ENCODE measurements at regions of chr16 and their contacts with region 1.

Region 1: GRCh38 chr16:2838928-2839327 is 8.8 kb downstream of the ZG16B start:
- DNase-seq: peak; percentile 71
- H3K4me3 ChIP-seq: no peak overlapping the region
- H3K27ac ChIP-seq: no peak overlapping the region
- H3K4me1 ChIP-seq: no peaks in the 10 kb centered on the region
- H3K27me3 ChIP-seq: no peaks in the 10 kb centered on the region
- CTCF ChIP-seq: peak; percentile 84

Region 2: DNA sequence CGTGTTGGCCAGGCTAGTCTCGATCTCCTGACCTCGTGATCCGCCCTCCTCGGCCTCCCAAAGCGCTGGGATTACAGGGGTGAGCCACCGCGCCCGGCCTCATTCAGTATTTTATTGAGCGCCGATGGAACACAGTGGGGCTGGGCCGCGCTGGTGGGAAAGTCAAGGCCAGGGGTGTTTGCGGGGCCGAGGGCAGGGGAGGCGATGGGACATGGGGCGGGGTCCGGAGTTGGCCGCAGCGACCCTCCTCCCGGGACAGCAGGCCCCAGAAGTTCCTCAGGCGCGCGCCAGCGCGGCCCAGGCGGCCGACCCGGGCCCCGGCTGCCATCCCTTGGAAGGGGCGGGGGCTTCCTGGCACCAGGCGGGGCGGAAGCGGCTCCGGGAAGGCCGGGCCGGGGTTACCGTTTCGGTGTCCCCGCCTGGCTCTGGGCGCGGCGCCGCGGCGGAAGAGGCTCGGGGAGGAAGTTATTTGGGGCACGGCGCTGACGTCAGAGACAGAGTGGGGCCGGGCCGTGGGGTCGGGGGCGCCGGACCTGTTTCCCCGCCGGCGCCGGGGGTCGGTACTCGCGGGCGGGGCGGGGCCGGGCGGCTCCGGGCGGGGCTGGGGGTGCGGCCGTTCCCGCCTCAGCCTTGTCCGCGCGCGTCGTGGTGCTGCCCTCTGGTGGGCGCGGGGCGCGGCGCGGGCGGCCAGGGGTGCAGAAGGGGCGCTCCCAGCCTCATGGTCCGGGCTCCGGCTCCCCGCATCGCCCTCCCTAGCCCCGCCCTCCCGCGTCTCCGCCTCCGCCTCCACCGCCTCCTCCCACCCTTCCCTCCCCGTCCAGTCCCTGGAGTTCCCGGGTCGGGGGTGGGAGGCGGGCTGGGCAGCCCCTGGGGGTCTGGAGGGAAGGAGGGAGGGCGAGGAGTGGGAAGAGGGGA is 118.0 kb before region 1 on chr16:
- CTCF ChIA-PET with region 1: no interaction called
- POLR2A ChIA-PET with region 1: no interaction called
- intact Hi-C with region 1: no loop called
- DNase-seq: peak; percentile 93
- H3K4me3 ChIP-seq: peak overlapping the region; percentile 59
- H3K27ac ChIP-seq: peak overlapping the region; percentile 68
- H3K4me1 ChIP-seq: no peaks in the 10 kb centered on the region
- H3K27me3 ChIP-seq: no peaks in the 10 kb centered on the region
- CTCF ChIP-seq: peak; percentile 56

Region 3: DNA sequence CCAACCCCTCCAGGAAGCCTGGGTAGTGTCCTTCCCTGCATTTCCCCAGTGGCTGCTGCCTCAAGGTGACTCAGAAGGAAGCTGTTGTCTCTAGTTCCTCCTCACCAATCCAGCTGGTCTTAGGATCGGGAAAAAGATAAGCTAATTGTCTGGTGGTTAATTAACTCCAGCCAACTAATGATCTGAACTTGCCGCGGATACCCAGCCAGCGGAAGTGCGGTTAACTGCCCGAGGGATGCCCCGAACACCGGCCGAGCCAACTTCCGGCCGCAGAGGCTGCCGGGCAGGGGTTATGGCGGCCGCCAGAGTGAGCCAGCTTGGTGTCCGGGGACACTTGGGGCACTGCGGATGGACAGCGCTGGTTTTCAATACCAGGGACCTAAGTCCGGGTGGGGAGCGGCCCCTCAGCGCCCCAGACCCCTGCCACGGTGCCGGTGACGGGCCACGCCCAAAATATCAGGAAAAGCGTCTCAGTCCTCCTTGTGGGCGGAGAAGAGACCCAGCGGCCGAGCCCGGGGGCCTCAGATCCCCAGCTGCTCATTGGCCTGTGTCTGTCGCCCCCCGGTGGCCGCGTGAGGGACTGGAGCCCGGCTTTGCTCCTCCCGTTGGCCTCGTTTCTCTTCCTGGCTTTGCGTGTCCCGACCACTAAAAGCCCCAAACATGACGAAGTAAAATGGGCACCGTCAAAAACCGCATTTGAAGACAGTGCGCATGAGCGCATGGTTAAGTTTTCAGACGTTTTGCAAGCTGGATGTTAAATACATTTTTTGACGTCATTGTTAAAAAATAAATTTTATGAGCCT is 29.3 kb after region 1 on chr16:
- CTCF ChIA-PET with region 1: interaction called, 16 read pairs
- POLR2A ChIA-PET with region 1: no interaction called
- intact Hi-C with region 1: no loop called
- DNase-seq: peak; percentile 97
- H3K4me3 ChIP-seq: peak overlapping the region; percentile 59
- H3K27ac ChIP-seq: peak overlapping the region; percentile 80
- H3K4me1 ChIP-seq: no peaks in the 10 kb centered on the region
- H3K27me3 ChIP-seq: peaks cover 16% of the 10 kb centered on the region
- CTCF ChIP-seq: peak; percentile 97

Region 4: GRCh38 chr16:4019371-4019791 is 1180.5 kb after region 1 on chr16:
- CTCF ChIA-PET with region 1: no interaction called
- POLR2A ChIA-PET with region 1: no interaction called
- intact Hi-C with region 1: no loop called
- DNase-seq: no peak
- H3K4me3 ChIP-seq: no peak overlapping the region
- H3K27ac ChIP-seq: no peak overlapping the region
- H3K4me1 ChIP-seq: no peaks in the 10 kb centered on the region
- H3K27me3 ChIP-seq: no peaks in the 10 kb centered on the region
- CTCF ChIP-seq: no peak